WTC11 (cell line): ENCODE measurements at regions of chr1 and their contacts with region 1.

Region 1: DNA sequence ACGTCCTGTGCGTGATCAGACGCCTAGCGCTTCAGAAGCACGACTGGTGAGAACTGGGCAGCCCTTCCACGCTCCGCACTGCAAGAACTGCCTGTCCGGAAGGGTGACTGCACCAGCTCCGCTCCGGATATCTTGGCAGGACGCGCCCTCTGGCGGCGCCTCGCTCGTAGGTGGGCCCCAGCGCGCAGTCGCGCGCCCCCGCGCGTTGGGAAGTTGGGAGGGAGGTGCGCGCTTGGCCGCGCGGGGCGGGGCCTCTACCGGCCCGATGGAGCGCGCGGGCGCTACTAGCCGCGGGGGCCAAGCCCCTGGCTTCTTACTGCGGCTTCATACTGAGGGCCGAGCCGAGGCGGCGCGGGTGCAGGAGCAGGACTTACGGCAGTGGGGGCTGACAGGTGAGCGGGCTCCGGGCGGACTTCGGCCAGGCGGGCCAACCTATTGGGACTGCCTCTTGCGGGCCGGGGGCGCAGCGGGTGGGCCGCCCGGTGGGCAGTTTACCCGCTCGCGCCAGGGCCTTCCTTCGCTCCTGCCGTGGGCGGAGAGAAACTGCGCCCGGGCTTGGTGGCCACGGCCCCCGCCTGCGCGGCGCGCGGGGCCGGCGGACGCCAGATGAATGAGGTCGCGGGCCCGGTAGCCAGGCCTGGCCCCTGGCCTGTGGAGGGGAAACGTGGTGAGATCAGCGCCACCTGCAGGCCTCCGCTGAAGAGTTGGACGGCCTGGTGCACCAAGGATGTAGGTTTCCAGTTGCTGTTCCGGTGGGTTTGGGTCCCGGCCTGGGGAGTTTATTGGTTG is at the start of gene CHD1L:
- DNase-seq: peak; percentile 92
- ATAC-seq: peak; percentile 83
- H3K4me3 Mint-ChIP-seq: peak within 1 kb of the TSS; percentile 79
- H3K27ac Mint-ChIP-seq: peak within 1 kb of the TSS; percentile 85
- H3K4me1 Mint-ChIP-seq: peaks cover 73% of the 10 kb centered on the region
- H3K27me3 Mint-ChIP-seq: no peaks in the 10 kb centered on the region
- CTCF ChIP-seq: peak; percentile 58
- total RNA-seq, gene CHD1L: 68.7 to 80.8 TPM (median 80.6 TPM) in 3 replicates

Region 2: DNA sequence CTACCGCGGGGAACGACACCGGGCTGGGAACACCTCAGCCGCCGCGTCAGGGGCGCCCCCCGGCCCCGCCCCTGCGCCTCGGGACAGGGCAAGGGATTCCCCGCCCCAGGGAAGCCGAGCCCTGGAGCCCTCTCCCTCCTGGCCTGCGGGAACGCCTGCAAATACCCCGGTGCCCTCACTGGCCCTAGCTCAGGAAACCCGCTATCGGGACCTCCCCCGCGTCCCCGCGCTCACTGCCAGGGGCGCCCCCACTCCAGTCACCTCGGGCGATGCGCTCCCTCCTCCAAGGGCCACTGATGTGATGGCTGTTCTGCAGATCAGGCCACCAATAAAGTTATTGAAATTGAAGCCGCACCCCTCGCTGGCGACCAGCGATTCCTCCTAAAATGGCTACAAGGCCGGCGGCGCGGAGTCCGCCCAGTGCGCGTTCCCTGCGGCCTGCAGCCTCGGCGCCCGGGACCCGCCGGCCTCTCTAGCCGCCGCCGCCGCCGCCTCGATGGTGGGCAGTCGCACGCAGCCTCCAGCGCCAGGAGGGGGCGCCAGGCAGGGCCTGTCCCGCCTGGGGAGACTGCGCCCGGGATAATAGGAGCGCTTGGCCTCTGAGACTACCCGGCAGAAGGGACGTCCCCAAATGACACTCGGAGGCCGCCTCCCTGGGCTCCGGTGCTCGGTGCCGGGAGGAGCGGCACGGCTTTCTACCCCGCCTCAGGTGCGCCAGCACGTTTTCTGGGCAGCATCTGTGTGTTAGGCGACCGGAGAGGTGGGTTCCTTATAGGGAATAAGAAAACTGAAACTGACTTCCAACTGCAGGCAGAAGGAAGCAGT is 70.3 kb before region 1 on chr1 and contains the start of gene PRKAB2:
- CTCF ChIA-PET with region 1: interaction called, 67 read pairs
- POLR2A ChIA-PET with region 1: interaction called, 3 read pairs
- DNase-seq: peak; percentile 95
- ATAC-seq: peak; percentile 92
- H3K4me3 Mint-ChIP-seq: peak within 1 kb of the TSS; percentile 95
- H3K27ac Mint-ChIP-seq: peak within 1 kb of the TSS; percentile 99
- H3K4me1 Mint-ChIP-seq: peaks cover 47% of the 10 kb centered on the region
- H3K27me3 Mint-ChIP-seq: no peaks in the 10 kb centered on the region
- CTCF ChIP-seq: peak; percentile 75
- total RNA-seq, gene PRKAB2: 22.6 to 28.3 TPM (median 27.8 TPM) in 3 replicates

Region 3: DNA sequence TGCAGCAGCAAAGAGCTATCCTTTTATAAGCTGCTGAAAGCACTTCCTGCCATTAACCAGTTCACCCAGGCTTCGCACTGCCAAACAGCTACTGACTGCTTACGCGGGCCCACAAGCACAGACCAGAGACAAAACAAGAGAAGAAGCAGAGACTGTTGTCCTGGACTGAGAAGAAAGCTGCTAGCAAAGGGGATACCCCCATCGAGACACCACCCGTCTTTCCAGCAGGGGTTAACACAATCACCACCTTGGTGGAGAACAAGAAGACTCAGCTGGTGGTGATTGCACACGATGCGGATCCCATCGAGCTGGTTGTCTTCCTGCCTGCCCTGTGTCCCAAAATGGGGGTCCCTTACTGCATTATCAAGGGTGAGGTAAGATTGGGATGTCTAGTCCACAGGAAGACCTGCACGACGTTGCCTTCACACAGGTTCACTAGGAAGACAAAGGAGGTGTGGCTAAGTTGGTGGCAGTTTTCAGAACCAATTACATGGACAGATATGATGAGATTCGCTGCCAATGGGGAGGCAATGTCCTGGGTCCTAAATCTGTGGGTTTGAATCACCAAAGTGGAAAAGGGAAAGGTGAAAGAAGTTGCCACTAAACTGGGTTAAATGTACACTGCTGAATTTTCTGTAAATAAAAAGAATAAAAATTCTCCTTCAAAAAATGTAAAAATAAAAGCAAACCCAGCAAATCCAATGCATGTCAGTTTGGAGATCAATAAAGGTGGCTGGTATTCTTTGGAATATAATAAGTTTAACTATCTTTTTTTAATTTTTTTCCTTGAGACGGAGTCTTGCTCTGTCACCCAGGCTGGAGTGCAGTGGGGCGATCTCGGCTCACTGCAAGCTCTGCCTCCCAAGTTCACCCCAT is 18.7 kb before region 1 on chr1:
- CTCF ChIA-PET with region 1: interaction called, 10 read pairs
- POLR2A ChIA-PET with region 1: no interaction called
- DNase-seq: no peak
- ATAC-seq: peak; percentile 27
- H3K4me3 Mint-ChIP-seq: peak overlapping the region; percentile 97
- H3K27ac Mint-ChIP-seq: peak overlapping the region; percentile 78; the same call in 1 of the 2 replicates
- H3K4me1 Mint-ChIP-seq: peaks cover 27% of the 10 kb centered on the region
- H3K27me3 Mint-ChIP-seq: peaks cover 19% of the 10 kb centered on the region
- CTCF ChIP-seq: no peak